ENCODE measurements at regions of chr13 and their contacts with region 1.

Region 1: DNA sequence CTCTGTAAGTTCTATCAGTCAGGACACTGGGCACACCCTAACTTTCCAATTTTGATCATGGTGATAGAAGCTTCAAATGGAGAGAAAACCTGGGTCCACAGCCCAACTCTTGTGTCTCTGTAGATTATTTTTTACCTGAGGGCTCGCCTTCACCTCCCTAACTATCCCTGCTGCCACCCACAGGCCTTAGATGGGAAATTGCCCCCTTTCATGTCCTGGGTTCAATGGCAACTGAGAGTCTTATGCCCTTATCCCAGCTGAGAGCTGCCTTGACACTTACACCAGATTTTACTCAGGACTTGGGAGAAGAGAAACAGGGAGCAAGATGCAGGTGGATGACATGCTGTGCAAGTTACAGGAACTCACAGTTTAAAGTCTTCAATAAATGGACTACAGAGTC is 81.7 kb downstream of the RAP2A start:
- DNase-seq: no peak
- H3K4me3 ChIP-seq: no peak overlapping the region
- H3K27ac ChIP-seq: no peak overlapping the region
- H3K4me1 ChIP-seq: no peaks in the 10 kb centered on the region
- H3K27me3 ChIP-seq: no peaks in the 10 kb centered on the region
- CTCF ChIP-seq: no peak

Region 2: DNA sequence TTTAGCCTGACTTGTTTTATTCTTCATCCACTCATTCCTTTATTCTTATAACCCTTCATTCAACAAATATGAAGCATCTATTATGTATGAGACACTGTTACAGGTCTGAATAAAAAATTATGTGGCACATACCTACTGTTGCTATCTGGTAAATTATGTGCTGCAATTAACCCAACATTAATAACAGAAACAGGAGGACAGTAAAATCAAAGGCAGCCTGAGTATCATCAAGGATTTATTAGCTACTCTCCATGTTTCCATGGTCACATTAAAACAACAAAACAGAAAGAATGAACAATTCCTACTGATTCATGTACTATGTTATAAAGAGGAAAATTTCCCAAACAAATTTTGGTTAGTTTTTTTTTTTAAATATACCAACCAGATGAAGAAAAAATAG is 37.8 kb before region 1 on chr13:
- CTCF ChIA-PET with region 1: no interaction called
- dilution Hi-C with region 1: no loop called
- in situ Hi-C with region 1: no loop called
- intact Hi-C with region 1: no loop called
- DNase-seq: no peak
- H3K4me3 ChIP-seq: no peak overlapping the region
- H3K27ac ChIP-seq: no peak overlapping the region
- H3K4me1 ChIP-seq: no peaks in the 10 kb centered on the region
- H3K27me3 ChIP-seq: no peaks in the 10 kb centered on the region
- CTCF ChIP-seq: no peak

Region 3: GRCh38 chr13:97548138-97548537 is 32.5 kb after region 1 on chr13:
- CTCF ChIA-PET with region 1: no interaction called
- dilution Hi-C with region 1: no loop called
- in situ Hi-C with region 1: no loop called
- intact Hi-C with region 1: no loop called
- DNase-seq: no peak
- H3K4me3 ChIP-seq: no peak overlapping the region
- H3K27ac ChIP-seq: no peak overlapping the region
- H3K4me1 ChIP-seq: no peaks in the 10 kb centered on the region
- H3K27me3 ChIP-seq: no peaks in the 10 kb centered on the region
- CTCF ChIP-seq: no peak

Region 4: GRCh38 chr13:97567510-97568243 is 52.0 kb after region 1 on chr13:
- CTCF ChIA-PET with region 1: no interaction called
- dilution Hi-C with region 1: no loop called
- in situ Hi-C with region 1: no loop called
- intact Hi-C with region 1: no loop called
- DNase-seq: peak; percentile 61
- H3K4me3 ChIP-seq: no peak overlapping the region
- H3K27ac ChIP-seq: no peak overlapping the region
- H3K4me1 ChIP-seq: peaks cover 12% of the 10 kb centered on the region
- H3K27me3 ChIP-seq: no peaks in the 10 kb centered on the region
- CTCF ChIP-seq: no peak

Region 5: DNA sequence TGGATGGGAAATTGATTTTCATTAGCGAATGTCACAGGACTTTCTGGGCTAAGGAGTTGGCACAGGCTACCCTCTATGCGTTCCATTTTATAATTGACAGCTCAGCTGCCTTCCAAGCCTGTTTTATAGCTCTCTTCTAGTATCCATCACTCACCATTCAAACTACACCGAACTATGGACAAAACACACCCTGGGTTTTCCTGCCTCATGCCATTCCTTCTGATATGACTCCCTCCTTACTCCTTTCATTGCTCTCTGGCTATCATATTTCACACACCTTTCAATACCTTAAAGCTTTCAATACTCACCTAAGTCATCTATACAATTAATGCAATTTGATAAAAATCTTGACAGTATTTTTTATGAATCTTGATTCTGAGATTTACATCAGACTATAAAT is 99.6 kb after region 1 on chr13:
- CTCF ChIA-PET with region 1: no interaction called
- dilution Hi-C with region 1: loop called (anchors 5 kb)
- in situ Hi-C with region 1: no loop called
- intact Hi-C with region 1: no loop called
- DNase-seq: no peak
- H3K4me3 ChIP-seq: no peak overlapping the region
- H3K27ac ChIP-seq: no peak overlapping the region
- H3K4me1 ChIP-seq: no peaks in the 10 kb centered on the region
- H3K27me3 ChIP-seq: no peaks in the 10 kb centered on the region
- CTCF ChIP-seq: no peak